H1 (cell line): ENCODE measurements at regions of chr11 and their contacts with region 1.

Region 1: GRCh38 chr11:66677599-66678375 is at the start of gene RBM4B:
- DNase-seq: peak; percentile 92 to 98
- H3K4me3 ChIP-seq: peak within 1 kb of the TSS; percentile 69 to 86 (median 78)
- H3K27ac ChIP-seq: peak within 1 kb of the TSS; percentile 88
- H3K4me1 ChIP-seq: peaks cover 3 to 15% (median 8%) of the 10 kb centered on the region in 4 experiments; a peak in 5 of 7 replicates
- H3K27me3 ChIP-seq: no peaks in the 10 kb centered on the region
- CTCF ChIP-seq: no peak
- EP300 ChIP-seq: no peak
- POLR2A ChIP-seq: peak; percentile 77 to 88
- RAD21 ChIP-seq: no peak
- total RNA-seq, gene RBM4B: 27.5 and 30.6 TPM in 2 replicates

Region 2: DNA sequence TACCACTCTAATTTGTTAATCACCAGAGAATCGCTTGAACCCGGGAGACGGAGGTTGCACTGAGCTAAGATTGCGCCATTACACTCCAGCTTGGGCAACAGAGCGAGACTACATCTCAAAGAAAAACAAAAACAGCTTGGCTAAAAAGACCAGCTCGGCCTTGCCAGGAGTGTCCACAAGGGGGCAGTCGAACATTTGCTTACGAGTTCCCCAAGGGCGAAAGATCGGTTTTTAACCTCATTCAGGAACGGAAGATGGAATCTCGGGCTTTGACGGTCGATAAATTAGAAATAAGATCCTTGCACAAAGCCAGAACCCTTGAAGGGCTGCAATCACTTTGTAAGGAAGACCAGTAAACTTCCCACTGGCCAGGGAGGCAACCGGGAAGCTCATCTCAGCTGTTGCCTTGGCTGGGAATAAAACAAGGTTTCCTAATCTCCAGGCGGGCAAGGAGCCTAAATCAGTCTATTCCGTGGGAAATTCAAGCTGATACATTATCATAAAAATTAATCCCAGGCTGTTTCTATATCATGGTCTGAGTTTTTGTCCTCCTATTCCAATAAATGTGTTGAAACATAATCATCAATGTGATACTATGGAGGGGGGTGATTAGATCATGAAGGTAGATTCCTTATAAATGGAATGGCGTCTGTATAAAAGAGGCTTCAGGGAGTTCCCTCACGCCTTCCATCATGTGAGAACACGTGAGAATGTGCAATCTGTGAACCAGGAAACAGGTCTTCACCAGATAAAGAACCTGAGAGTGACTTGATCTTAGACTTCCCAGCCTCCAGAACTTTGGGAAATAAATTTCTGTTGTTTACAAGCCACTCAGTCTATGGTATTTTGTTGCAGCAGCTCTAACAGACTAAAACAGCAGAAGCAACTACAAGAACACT is 291.4 kb before region 1 on chr11:
- CTCF ChIA-PET with region 1: interaction called, 10 read pairs
- POLR2A ChIA-PET with region 1: interaction called, 4 read pairs
- DNase-seq: peak; percentile 75 to 97
- H3K4me3 ChIP-seq: peak overlapping the region in 3 of 4 experiments; percentile 16 to 46 (median 23); a peak in 6 of 8 replicates
- H3K27ac ChIP-seq: no peak overlapping the region
- H3K4me1 ChIP-seq: no peaks in the 10 kb centered on the region
- H3K27me3 ChIP-seq: no peaks in the 10 kb centered on the region
- CTCF ChIP-seq: peak; percentile 79 to 99 (median 89)
- EP300 ChIP-seq: no peak
- POLR2A ChIP-seq: no peak
- RAD21 ChIP-seq: peak; percentile 75 to 78

Region 3: GRCh38 chr11:66491315-66491935 is 186.4 kb before region 1 on chr11:
- CTCF ChIA-PET with region 1: interaction called, 18 read pairs
- POLR2A ChIA-PET with region 1: interaction called, 6 read pairs
- DNase-seq: peak in 1 of 2 experiments; percentile 81
- H3K4me3 ChIP-seq: peak overlapping the region in 1 of 4 experiments; percentile 10; a peak in 1 of 8 replicates
- H3K27ac ChIP-seq: no peak overlapping the region
- H3K4me1 ChIP-seq: peaks cover 0 to 12% (median 5%) of the 10 kb centered on the region in 4 experiments; a peak in 4 of 7 replicates
- H3K27me3 ChIP-seq: no peaks in the 10 kb centered on the region
- CTCF ChIP-seq: peak; percentile 64 to 82 (median 72)
- EP300 ChIP-seq: no peak
- POLR2A ChIP-seq: peak in 1 of 2 experiments; percentile 29; a peak in 1 of 3 replicates
- RAD21 ChIP-seq: peak; percentile 36 to 54; a peak in 3 of 4 replicates

Region 4: GRCh38 chr11:66559142-66559865 is 118.5 kb before region 1 on chr11:
- CTCF ChIA-PET with region 1: interaction called, 12 read pairs
- POLR2A ChIA-PET with region 1: interaction called, 4 read pairs
- DNase-seq: no peak
- H3K4me3 ChIP-seq: no peak overlapping the region
- H3K27ac ChIP-seq: no peak overlapping the region
- H3K4me1 ChIP-seq: peaks cover 0 to 2% (median 0%) of the 10 kb centered on the region in 4 experiments; a peak in 1 of 7 replicates
- H3K27me3 ChIP-seq: no peaks in the 10 kb centered on the region
- CTCF ChIP-seq: no peak
- EP300 ChIP-seq: no peak
- POLR2A ChIP-seq: no peak
- RAD21 ChIP-seq: no peak

Region 5: DNA sequence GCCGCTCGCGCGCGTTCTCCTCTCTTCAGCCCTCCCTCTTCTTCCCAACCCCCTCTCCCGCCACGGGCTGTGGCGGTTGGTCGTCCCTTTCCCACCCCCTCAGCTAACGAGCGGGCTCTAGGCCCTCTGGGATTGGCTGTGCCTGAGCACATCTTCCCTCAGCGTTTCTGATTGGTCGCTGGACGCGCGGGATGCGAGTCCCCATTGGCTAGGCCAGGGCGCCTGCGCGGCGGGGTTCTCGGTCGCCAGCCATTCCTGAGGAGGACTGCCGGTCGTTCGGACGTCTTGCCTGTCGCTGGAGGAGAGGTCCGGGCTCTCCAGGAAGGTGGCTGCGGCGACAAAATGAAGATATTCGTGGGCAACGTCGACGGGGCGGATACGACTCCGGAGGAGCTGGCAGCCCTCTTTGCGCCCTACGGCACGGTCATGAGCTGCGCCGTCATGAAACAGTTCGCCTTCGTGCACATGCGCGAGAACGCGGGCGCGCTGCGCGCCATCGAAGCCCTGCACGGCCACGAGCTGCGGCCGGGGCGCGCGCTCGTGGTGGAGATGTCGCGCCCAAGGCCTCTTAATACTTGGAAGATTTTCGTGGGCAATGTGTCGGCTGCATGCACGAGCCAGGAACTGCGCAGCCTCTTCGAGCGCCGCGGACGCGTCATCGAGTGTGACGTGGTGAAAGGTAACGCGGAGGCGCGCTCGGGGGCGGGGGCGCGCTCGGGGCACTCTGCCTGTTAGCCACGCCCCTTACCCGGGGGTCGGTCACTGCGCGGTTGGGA is 61.2 kb before region 1 on chr11 and contains the start of gene RBM14:
- CTCF ChIA-PET with region 1: interaction called, 3 read pairs
- POLR2A ChIA-PET with region 1: interaction called, 2,165 read pairs
- DNase-seq: peak; percentile 96 to 99
- H3K4me3 ChIP-seq: peak within 1 kb of the TSS; percentile 81 to 99 (median 92)
- H3K27ac ChIP-seq: peak within 1 kb of the TSS; percentile 98
- H3K4me1 ChIP-seq: peaks cover 0 to 15% (median 3%) of the 10 kb centered on the region in 4 experiments; a peak in 4 of 7 replicates
- H3K27me3 ChIP-seq: no peaks in the 10 kb centered on the region
- CTCF ChIP-seq: no peak
- EP300 ChIP-seq: no peak
- POLR2A ChIP-seq: peak; percentile 92 to 98
- RAD21 ChIP-seq: no peak
- total RNA-seq, gene RBM14: 142 and 145 TPM in 2 replicates

Region 6: GRCh38 chr11:66651016-66651415 is 26.8 kb before region 1 on chr11:
- CTCF ChIA-PET with region 1: interaction called, 5 read pairs
- POLR2A ChIA-PET with region 1: interaction called, 2,165 read pairs
- DNase-seq: no peak
- H3K4me3 ChIP-seq: no peak overlapping the region
- H3K27ac ChIP-seq: no peak overlapping the region
- H3K4me1 ChIP-seq: no peaks in the 10 kb centered on the region
- H3K27me3 ChIP-seq: no peaks in the 10 kb centered on the region
- CTCF ChIP-seq: no peak
- EP300 ChIP-seq: no peak
- POLR2A ChIP-seq: no peak
- RAD21 ChIP-seq: no peak

Region 7: GRCh38 chr11:66734215-66734614 is 56.4 kb after region 1 on chr11:
- CTCF ChIA-PET with region 1: no interaction called
- POLR2A ChIA-PET with region 1: no interaction called
- DNase-seq: no peak
- H3K4me3 ChIP-seq: no peak overlapping the region
- H3K27ac ChIP-seq: no peak overlapping the region
- H3K4me1 ChIP-seq: peaks cover 0 to 3% (median 0%) of the 10 kb centered on the region in 4 experiments; a peak in 3 of 7 replicates
- H3K27me3 ChIP-seq: peaks cover 0 to 12% (median 5%) of the 10 kb centered on the region in 4 experiments; a peak in 6 of 7 replicates
- CTCF ChIP-seq: no peak
- EP300 ChIP-seq: no peak
- POLR2A ChIP-seq: no peak
- RAD21 ChIP-seq: no peak

Region 8: DNA sequence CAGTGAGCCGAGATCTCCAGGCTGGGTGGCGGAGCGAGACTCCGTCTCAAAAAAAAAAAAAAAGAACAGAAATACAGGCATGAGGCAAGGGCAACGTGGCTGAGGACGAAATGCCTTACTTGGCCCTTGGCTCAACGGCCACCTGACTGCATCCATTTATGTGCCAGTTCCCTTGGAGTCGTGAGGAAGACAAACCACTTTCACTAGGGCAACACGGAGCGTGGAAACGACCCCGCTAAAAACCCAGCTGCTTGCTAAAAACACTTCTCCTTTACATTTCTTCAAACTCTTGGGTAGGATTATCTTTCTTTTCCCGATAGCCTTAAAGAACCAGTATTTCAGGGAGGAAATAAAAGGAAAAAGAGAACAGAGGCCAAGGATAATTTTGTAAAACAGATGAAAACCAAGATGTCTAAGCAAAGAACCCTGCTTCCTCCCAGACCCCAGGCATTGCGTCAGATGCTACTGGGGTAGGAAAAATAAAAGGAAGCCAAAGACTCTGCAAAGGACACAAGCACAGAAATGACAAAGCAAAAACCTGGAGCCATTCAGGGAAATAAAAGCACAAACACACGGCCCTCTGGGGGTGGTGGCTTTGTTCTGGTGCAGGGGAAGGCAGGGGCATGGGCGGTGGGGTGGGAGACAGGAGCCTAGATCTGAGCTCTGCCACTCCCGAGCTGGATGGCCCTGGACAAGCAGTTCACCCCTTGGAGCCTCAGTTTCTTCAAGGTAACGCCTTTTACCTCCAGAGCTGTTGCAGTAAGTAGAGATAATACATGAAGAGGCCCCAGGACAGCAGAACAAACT is 243.4 kb after region 1 on chr11:
- CTCF ChIA-PET with region 1: no interaction called
- POLR2A ChIA-PET with region 1: no interaction called
- DNase-seq: no peak
- H3K4me3 ChIP-seq: no peak overlapping the region
- H3K27ac ChIP-seq: peak overlapping the region; percentile 20; the same call in 1 of the 2 replicates
- H3K4me1 ChIP-seq: peaks cover 0 to 4% (median 0%) of the 10 kb centered on the region in 4 experiments; a peak in 2 of 7 replicates
- H3K27me3 ChIP-seq: no peaks in the 10 kb centered on the region
- CTCF ChIP-seq: no peak
- EP300 ChIP-seq: no peak
- POLR2A ChIP-seq: no peak
- RAD21 ChIP-seq: no peak

Region 9: GRCh38 chr11:67146516-67147226 is 468.9 kb after region 1 on chr11:
- CTCF ChIA-PET with region 1: no interaction called
- POLR2A ChIA-PET with region 1: no interaction called
- DNase-seq: no peak
- H3K4me3 ChIP-seq: no peak overlapping the region
- H3K27ac ChIP-seq: no peak overlapping the region
- H3K4me1 ChIP-seq: no peaks in the 10 kb centered on the region
- H3K27me3 ChIP-seq: no peaks in the 10 kb centered on the region
- CTCF ChIP-seq: no peak
- EP300 ChIP-seq: no peak
- POLR2A ChIP-seq: no peak
- RAD21 ChIP-seq: no peak